SK-N-SH (cell line): ENCODE measurements at regions of chr11 and their contacts with region 1.

Region 1: DNA sequence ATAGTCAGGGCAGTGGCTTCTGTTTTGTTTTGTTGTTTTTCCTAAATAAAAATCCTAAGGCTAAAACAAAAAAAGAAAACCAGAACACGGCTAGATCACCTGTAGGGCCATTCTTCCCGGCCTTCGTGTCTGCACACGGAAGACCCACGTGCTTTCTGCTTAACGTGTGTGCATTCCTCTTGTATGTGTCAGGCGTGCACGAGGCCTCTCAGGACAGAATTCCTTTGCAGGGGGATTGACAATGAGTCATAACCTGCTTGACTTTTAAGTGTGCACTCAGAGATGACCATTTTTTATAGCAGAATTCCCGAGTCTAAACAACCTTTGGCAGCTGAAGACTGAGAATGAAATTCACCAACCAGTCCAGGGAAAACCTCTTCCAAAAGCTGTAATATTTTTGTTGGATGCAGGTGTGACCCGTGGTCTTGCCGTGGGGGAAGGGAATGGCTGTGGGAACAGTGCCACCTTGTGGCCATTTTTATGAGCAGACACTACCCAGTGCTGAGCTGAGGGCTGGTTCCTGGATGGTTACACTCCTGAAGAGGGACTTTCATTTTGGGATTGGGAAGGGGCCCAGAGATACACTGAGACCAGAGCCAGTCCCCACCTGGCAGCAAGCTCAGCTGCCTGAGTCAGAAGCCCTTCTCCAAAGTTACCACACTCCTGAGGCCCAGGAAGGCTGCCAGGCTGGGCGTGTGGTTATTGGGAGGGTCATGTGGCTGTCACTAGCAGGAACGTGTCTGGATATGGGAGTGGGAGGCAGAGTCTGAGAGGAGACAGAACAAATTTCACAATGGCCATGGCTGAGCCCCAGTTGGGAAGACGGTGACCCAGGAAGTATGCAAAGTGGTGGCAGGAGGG is 35.8 kb upstream of the DKK3 start:
- DNase-seq: peak; percentile 74
- H3K4me3 ChIP-seq: peak overlapping the region in 1 of 2 experiments; percentile 29; a peak in 3 of 4 replicates
- H3K27ac ChIP-seq: peak overlapping the region; percentile 70 to 96; a peak in 3 of 4 replicates
- H3K4me1 ChIP-seq: peaks cover 6 to 16% of the 10 kb centered on the region in 2 experiments; a peak in 3 of 4 replicates
- H3K27me3 ChIP-seq: no peaks in the 10 kb centered on the region
- CTCF ChIP-seq: peak; percentile 97
- EP300 ChIP-seq: peak; percentile 16 to 95; a peak in 3 of 4 replicates
- RAD21 ChIP-seq: peak; percentile 95

Region 2: DNA sequence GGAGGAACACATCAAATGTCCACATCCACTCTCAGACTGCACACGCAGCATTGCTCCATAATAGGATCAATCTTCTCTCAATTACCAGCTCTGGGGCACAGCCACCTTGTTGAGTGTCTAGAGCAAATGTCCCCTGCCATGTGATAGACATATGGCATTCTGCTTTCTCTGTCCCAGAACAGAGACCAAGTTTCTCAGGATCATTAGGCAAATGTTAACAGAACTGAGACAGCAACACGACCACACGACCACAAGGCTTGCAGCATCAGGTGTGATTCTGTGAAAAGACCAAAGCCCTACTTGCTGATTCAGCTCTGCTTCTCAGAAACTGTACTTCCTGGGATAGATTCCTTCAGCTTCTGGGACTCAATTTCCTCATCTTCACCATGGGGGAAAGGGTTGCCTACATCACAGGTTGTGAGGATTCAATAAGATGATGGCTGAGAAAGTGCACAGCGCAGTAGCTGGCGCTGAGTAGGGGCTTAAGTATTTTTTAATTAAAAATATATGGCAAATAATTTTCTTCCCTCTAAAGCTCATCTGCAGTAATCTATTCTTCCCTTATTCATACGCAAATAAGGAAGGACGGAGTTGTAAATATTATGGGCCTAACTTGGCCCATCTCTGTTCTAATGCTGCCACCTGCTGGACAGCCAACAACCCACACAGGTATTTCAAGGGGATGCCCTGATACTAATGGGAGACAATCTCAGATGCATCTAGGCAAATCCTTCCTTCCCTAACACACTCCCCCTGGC is 256.7 kb before region 1 on chr11:
- CTCF ChIA-PET with region 1: interaction called, 20 read pairs
- POLR2A ChIA-PET with region 1: no interaction called
- DNase-seq: peak; percentile 57
- H3K4me3 ChIP-seq: no peak overlapping the region
- H3K27ac ChIP-seq: no peak overlapping the region
- H3K4me1 ChIP-seq: no peaks in the 10 kb centered on the region; a peak in 1 of 4 replicates
- H3K27me3 ChIP-seq: no peaks in the 10 kb centered on the region
- CTCF ChIP-seq: peak; percentile 94
- EP300 ChIP-seq: no peak
- RAD21 ChIP-seq: peak; percentile 98

Region 3: DNA sequence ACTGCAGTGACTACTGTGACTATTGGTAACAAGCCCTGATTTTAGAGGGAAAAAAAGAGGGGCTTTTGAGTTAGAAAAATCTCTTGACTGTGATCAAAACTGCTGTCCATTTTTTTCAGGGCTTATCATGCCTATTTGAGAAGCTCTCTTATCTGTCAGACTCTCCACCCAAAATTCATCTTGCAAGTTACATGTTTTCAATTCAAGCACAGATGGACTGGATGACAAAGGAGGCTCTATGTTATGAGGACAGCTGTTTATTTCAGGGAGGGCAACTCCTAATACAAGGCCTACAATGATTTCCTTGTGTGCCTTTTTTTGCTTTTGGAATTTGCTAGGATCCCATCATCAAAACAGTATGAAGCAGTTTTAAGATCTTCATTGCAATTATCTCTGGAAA is 237.6 kb before region 1 on chr11:
- CTCF ChIA-PET with region 1: interaction called, 77 read pairs
- POLR2A ChIA-PET with region 1: no interaction called
- DNase-seq: no peak
- H3K4me3 ChIP-seq: no peak overlapping the region
- H3K27ac ChIP-seq: no peak overlapping the region
- H3K4me1 ChIP-seq: 0 out of 4 replicates have a peak, but pooled peaks cover 0 to 3% of the 10 kb centered on the region in 2 experiments
- H3K27me3 ChIP-seq: no peaks in the 10 kb centered on the region
- CTCF ChIP-seq: no peak
- EP300 ChIP-seq: no peak
- RAD21 ChIP-seq: no peak

Region 4: DNA sequence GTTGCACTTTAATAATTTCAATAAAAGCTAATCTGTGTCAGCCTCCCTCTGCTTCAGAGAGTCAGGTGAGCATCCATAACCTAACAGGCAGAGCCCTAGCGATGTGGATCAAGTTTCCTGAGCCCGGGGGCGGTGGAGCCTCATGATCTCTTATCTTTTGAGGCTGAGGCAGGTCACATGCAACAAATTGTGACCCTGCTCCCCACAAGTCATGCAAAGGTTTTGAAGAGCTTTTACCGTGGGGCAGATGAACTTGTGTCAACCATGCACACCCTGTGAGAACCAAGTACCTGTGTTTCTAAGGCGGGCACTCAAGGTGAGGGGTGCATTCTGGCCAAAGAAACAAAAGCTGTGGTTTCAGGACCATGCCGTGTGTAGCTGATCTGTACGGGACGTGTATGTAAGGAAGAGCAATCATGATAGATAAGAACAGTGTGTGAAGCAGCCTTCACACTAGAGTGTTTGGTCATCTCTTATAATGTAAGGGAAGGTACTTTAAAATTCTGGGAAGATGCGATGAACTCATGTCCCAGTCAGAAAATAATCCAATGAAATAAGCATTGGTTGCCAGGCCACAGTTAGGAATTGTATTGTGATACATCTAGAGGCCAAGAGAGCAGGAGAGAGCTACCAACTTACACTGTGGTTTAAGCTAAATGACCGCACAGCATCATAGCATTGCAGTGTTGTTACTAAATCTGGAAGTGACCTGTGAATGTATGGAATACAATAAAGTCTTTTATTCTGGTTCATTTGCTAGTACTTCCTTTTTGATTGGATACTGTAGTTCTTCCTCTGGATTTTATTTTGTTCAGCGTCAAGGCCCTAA is 85.6 kb before region 1 on chr11:
- CTCF ChIA-PET with region 1: interaction called, 10 read pairs
- POLR2A ChIA-PET with region 1: no interaction called
- DNase-seq: no peak
- H3K4me3 ChIP-seq: no peak overlapping the region
- H3K27ac ChIP-seq: peak overlapping the region; percentile 22 to 46; a peak in 2 of 4 replicates
- H3K4me1 ChIP-seq: peaks cover 0 to 5% of the 10 kb centered on the region in 2 experiments; a peak in 1 of 4 replicates
- H3K27me3 ChIP-seq: no peaks in the 10 kb centered on the region
- CTCF ChIP-seq: no peak
- EP300 ChIP-seq: no peak
- RAD21 ChIP-seq: no peak

Region 5: GRCh38 chr11:12008790-12009616 is 35.2 kb before region 1 on chr11:
- CTCF ChIA-PET with region 1: interaction called, 11 read pairs
- POLR2A ChIA-PET with region 1: no interaction called
- DNase-seq: peak; percentile 99
- H3K4me3 ChIP-seq: peak overlapping the region; percentile 92 to 94
- H3K27ac ChIP-seq: peak overlapping the region; percentile 77 to 85
- H3K4me1 ChIP-seq: peaks cover 29 to 33% of the 10 kb centered on the region in 2 experiments; a peak in 3 of 4 replicates
- H3K27me3 ChIP-seq: no peaks in the 10 kb centered on the region
- CTCF ChIP-seq: no peak
- EP300 ChIP-seq: no peak
- RAD21 ChIP-seq: no peak

Region 6: DNA sequence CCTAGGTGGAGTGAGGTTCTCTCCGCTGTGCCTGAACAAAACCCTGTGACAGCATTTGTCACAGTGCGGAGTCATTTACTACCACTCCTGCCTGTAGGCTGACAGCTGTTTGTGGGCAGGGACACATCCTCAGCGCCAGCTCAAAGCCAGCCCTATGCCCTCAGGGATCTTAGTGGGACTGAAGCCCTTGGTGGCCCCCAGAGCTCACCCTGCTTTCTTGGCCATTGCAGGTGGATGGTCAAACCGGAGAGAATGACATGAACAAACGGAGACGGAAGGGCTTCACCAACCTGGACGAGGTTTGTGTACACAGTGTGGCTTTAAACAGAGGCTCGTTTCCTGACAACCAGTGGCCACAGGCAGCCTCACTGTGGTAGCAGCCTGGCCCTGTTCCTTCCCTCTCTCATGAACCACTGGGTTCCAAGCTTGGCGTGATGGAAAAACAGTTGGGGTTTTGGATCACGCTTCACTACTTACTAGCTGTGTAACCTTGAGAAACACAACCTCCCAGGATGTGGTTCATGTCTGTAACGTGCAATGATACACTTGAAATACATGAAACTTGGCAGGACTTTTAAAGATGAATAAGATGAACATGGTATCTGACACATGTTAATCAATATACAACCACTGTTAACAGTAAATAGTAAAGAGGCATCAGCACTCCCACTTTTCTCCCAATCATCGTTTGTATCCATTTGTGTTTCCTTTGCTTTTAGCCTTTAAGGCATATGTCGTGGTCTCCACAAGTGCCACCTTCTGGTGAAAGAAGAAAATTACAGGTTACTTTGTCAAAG is 192.0 kb after region 1 on chr11:
- CTCF ChIA-PET with region 1: interaction called, 20 read pairs
- POLR2A ChIA-PET with region 1: no interaction called
- DNase-seq: peak; percentile 55
- H3K4me3 ChIP-seq: no peak overlapping the region; a peak in 1 of 4 replicates
- H3K27ac ChIP-seq: peak overlapping the region in 1 of 2 experiments; percentile 97; a peak in 2 of 4 replicates
- H3K4me1 ChIP-seq: peaks cover 0 to 23% of the 10 kb centered on the region in 2 experiments; a peak in 3 of 4 replicates
- H3K27me3 ChIP-seq: no peaks in the 10 kb centered on the region
- CTCF ChIP-seq: peak; percentile 72
- EP300 ChIP-seq: no peak
- RAD21 ChIP-seq: peak; percentile 71

Region 7: GRCh38 chr11:12281571-12282478 is 237.6 kb after region 1 on chr11:
- CTCF ChIA-PET with region 1: interaction called, 488 read pairs
- POLR2A ChIA-PET with region 1: no interaction called
- DNase-seq: peak; percentile 89
- H3K4me3 ChIP-seq: no peak overlapping the region
- H3K27ac ChIP-seq: peak overlapping the region in 1 of 2 experiments; percentile 100; a peak in 2 of 4 replicates
- H3K4me1 ChIP-seq: peaks cover 14 to 36% of the 10 kb centered on the region in 2 experiments
- H3K27me3 ChIP-seq: no peaks in the 10 kb centered on the region
- CTCF ChIP-seq: peak; percentile 96
- EP300 ChIP-seq: no peak
- RAD21 ChIP-seq: peak; percentile 100

Region 8: GRCh38 chr11:12420040-12420439 is 375.9 kb after region 1 on chr11:
- CTCF ChIA-PET with region 1: no interaction called
- POLR2A ChIA-PET with region 1: no interaction called
- DNase-seq: no peak
- H3K4me3 ChIP-seq: no peak overlapping the region
- H3K27ac ChIP-seq: peak overlapping the region in 1 of 2 experiments; percentile 72; a peak in 2 of 4 replicates
- H3K4me1 ChIP-seq: peaks cover 10 to 17% of the 10 kb centered on the region in 2 experiments
- H3K27me3 ChIP-seq: no peaks in the 10 kb centered on the region
- CTCF ChIP-seq: no peak
- EP300 ChIP-seq: no peak
- RAD21 ChIP-seq: no peak